Caco-2 (cell line): ENCODE measurements at regions of chr6 and their contacts with region 1.

Region 1: DNA sequence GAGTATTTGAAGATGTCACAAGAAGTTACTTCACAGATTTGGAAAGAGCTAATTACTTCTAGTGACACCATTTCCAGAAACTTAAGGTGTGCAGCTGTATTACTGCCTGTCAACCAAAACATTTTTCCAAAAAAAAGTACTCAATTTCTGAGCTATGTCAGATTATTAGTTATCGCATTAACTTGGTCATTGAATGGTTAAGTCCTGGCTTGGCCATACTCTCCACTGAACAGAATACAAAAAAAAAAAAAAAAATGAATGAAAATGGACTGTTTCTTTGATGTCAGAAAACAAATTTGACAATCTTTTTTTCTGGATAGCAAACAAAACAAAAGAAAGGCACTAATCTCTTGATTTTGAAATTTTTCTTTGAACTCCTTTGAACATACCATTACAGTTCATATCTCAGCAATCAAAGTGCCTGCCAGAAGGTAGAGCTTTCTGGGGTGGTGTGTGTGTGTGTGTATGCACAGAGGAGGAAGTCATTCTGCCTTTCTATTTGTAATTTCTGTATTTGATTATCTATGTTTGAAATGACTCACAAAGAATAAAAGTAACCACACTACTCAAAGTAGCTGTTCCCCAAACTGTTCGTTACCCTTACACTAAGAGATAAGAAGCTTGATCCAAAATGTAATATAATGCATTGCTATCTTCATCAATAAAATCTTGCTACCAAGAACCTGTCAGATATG is 210.8 kb upstream of the FUT9 start:
- DNase-seq: peak; percentile 80 to 84
- H3K4me3 ChIP-seq: no peak overlapping the region
- H3K4me3 Mint-ChIP-seq: peak overlapping the region; percentile 45
- H3K27ac Mint-ChIP-seq: peak overlapping the region; percentile 92
- H3K4me1 ChIP-seq: peaks cover 40% of the 10 kb centered on the region
- H3K4me1 Mint-ChIP-seq: peaks cover 10% of the 10 kb centered on the region
- H3K27me3 ChIP-seq: no peaks in the 10 kb centered on the region
- H3K27me3 Mint-ChIP-seq: no peaks in the 10 kb centered on the region
- CTCF ChIP-seq: no peak

Region 2: DNA sequence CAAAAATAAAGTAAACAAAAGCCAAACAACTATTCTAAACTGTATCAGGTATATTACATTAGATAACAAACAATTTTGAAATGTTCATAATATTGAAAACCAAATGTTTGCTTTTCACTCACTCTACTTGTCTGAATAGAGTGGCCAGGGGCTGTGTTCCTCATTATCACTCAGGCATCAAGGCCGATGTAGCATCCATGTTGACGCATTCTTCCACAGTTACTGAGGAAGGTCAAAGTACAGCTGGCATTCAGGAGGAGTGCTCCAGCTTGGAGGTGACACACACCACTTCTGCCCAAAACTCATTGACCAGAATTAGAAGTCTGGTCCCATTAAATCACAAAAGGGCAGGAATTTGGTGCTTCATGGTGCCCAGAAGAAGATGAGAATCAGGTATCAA is 365.3 kb before region 1 on chr6:
- CTCF ChIA-PET with region 1: no interaction called
- POLR2A ChIA-PET with region 1: no interaction called
- intact Hi-C with region 1: no loop called
- DNase-seq: peak in 1 of 2 experiments; percentile 8
- H3K4me3 ChIP-seq: no peak overlapping the region
- H3K4me3 Mint-ChIP-seq: no peak overlapping the region
- H3K27ac Mint-ChIP-seq: no peak overlapping the region
- H3K4me1 ChIP-seq: peaks cover 7% of the 10 kb centered on the region; the same call in 1 of the 2 replicates
- H3K4me1 Mint-ChIP-seq: peaks cover 6% of the 10 kb centered on the region
- H3K27me3 ChIP-seq: no peaks in the 10 kb centered on the region
- H3K27me3 Mint-ChIP-seq: no peaks in the 10 kb centered on the region
- CTCF ChIP-seq: no peak

Region 3: GRCh38 chr6:95577304-95578105 is 227.5 kb before region 1 on chr6 and contains the start of gene MANEA:
- CTCF ChIA-PET with region 1: no interaction called
- POLR2A ChIA-PET with region 1: interaction called, 6 read pairs
- intact Hi-C with region 1: loop called (anchors 1 kb)
- DNase-seq: peak; percentile 91 to 92
- H3K4me3 ChIP-seq: peak within 1 kb of the TSS; percentile 54
- H3K4me3 Mint-ChIP-seq: peak within 1 kb of the TSS; percentile 97
- H3K27ac Mint-ChIP-seq: peak within 1 kb of the TSS; percentile 89
- H3K4me1 ChIP-seq: peaks cover 16% of the 10 kb centered on the region
- H3K4me1 Mint-ChIP-seq: peaks cover 14% of the 10 kb centered on the region
- H3K27me3 ChIP-seq: no peaks in the 10 kb centered on the region
- H3K27me3 Mint-ChIP-seq: no peaks in the 10 kb centered on the region
- CTCF ChIP-seq: no peak
- total RNA-seq, gene MANEA: 15.7 and 17.1 TPM in 2 replicates

Region 4: GRCh38 chr6:95742767-95743289 is 62.2 kb before region 1 on chr6:
- CTCF ChIA-PET with region 1: no interaction called
- POLR2A ChIA-PET with region 1: no interaction called
- intact Hi-C with region 1: no loop called
- DNase-seq: no peak
- H3K4me3 ChIP-seq: no peak overlapping the region
- H3K4me3 Mint-ChIP-seq: no peak overlapping the region
- H3K27ac Mint-ChIP-seq: no peak overlapping the region
- H3K4me1 ChIP-seq: no peaks in the 10 kb centered on the region
- H3K4me1 Mint-ChIP-seq: no peaks in the 10 kb centered on the region
- H3K27me3 ChIP-seq: no peaks in the 10 kb centered on the region
- H3K27me3 Mint-ChIP-seq: no peaks in the 10 kb centered on the region
- CTCF ChIP-seq: no peak

Region 5: DNA sequence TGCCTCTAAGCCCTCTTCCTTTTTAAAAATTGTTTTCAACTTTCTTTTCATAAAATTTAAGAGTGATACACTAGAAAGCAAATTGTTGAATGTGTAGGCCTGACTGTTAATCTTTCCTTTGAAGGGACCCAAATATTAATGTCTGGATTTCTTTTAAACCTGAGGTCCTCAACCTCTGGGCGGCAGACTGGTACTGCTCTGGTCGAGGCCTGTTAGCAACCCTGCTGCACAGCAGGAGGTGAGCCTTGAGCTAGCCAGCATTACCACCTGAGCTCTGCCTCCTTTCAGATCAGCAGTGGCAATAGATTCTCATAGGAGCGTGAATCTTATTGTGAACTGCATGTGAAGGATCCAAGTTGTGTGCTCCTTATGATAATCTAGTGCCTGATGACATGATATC is 36.5 kb before region 1 on chr6:
- CTCF ChIA-PET with region 1: no interaction called
- POLR2A ChIA-PET with region 1: no interaction called
- intact Hi-C with region 1: no loop called
- DNase-seq: peak; percentile 23 to 37
- H3K4me3 ChIP-seq: no peak overlapping the region
- H3K4me3 Mint-ChIP-seq: no peak overlapping the region
- H3K27ac Mint-ChIP-seq: peak overlapping the region; percentile 13
- H3K4me1 ChIP-seq: peaks cover 15% of the 10 kb centered on the region; the same call in 1 of the 2 replicates
- H3K4me1 Mint-ChIP-seq: peaks cover 26% of the 10 kb centered on the region
- H3K27me3 ChIP-seq: no peaks in the 10 kb centered on the region
- H3K27me3 Mint-ChIP-seq: no peaks in the 10 kb centered on the region
- CTCF ChIP-seq: no peak

Region 6: GRCh38 chr6:95780037-95780436 is 25.0 kb before region 1 on chr6:
- CTCF ChIA-PET with region 1: no interaction called
- POLR2A ChIA-PET with region 1: no interaction called
- intact Hi-C with region 1: loop called (anchors 1 kb)
- DNase-seq: peak in 1 of 2 experiments; percentile 14
- H3K4me3 ChIP-seq: no peak overlapping the region
- H3K4me3 Mint-ChIP-seq: peak overlapping the region; percentile 25
- H3K27ac Mint-ChIP-seq: peak overlapping the region; percentile 82
- H3K4me1 ChIP-seq: peaks cover 25% of the 10 kb centered on the region
- H3K4me1 Mint-ChIP-seq: peaks cover 20% of the 10 kb centered on the region
- H3K27me3 ChIP-seq: no peaks in the 10 kb centered on the region
- H3K27me3 Mint-ChIP-seq: no peaks in the 10 kb centered on the region
- CTCF ChIP-seq: no peak

Region 7: GRCh38 chr6:95790787-95791186 is 14.2 kb before region 1 on chr6:
- CTCF ChIA-PET with region 1: no interaction called
- POLR2A ChIA-PET with region 1: no interaction called
- intact Hi-C with region 1: loop called (anchors 2 kb)
- DNase-seq: no peak
- H3K4me3 ChIP-seq: no peak overlapping the region
- H3K4me3 Mint-ChIP-seq: no peak overlapping the region
- H3K27ac Mint-ChIP-seq: peak overlapping the region; percentile 48
- H3K4me1 ChIP-seq: peaks cover 29% of the 10 kb centered on the region
- H3K4me1 Mint-ChIP-seq: no peaks in the 10 kb centered on the region
- H3K27me3 ChIP-seq: no peaks in the 10 kb centered on the region
- H3K27me3 Mint-ChIP-seq: no peaks in the 10 kb centered on the region
- CTCF ChIP-seq: no peak

Region 8: GRCh38 chr6:95847061-95847460 is 42.1 kb after region 1 on chr6:
- CTCF ChIA-PET with region 1: no interaction called
- POLR2A ChIA-PET with region 1: no interaction called
- intact Hi-C with region 1: no loop called
- DNase-seq: peak in 1 of 2 experiments; percentile 30
- H3K4me3 ChIP-seq: no peak overlapping the region
- H3K4me3 Mint-ChIP-seq: no peak overlapping the region
- H3K27ac Mint-ChIP-seq: no peak overlapping the region
- H3K4me1 ChIP-seq: peaks cover 7% of the 10 kb centered on the region
- H3K4me1 Mint-ChIP-seq: no peaks in the 10 kb centered on the region
- H3K27me3 ChIP-seq: no peaks in the 10 kb centered on the region
- H3K27me3 Mint-ChIP-seq: no peaks in the 10 kb centered on the region
- CTCF ChIP-seq: no peak

Region 9: DNA sequence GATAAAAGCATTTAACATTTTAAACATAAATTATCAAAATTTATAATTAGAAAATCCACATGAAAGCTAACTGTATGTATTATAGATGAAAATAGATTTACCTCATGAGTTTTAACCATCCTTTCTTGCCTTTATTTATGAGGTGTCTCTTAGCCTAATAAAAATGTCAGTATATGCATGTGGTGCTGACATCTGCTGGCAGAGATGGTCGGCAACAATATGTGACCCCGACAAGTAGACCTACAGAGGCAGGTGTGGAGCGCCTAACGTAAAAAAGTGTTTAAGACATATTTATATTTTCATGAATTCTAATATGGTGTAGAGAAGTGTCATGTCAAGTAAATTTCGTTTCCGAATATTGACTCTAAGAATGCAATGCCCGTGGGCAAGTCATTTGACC is 61.7 kb after region 1 on chr6:
- CTCF ChIA-PET with region 1: no interaction called
- POLR2A ChIA-PET with region 1: no interaction called
- intact Hi-C with region 1: loop called (anchors 5 kb)
- DNase-seq: peak; percentile 39 to 43
- H3K4me3 ChIP-seq: no peak overlapping the region
- H3K4me3 Mint-ChIP-seq: no peak overlapping the region
- H3K27ac Mint-ChIP-seq: no peak overlapping the region
- H3K4me1 ChIP-seq: no peaks in the 10 kb centered on the region
- H3K4me1 Mint-ChIP-seq: peaks cover 7% of the 10 kb centered on the region
- H3K27me3 ChIP-seq: no peaks in the 10 kb centered on the region
- H3K27me3 Mint-ChIP-seq: no peaks in the 10 kb centered on the region
- CTCF ChIP-seq: peak; percentile 50 to 54

Region 10: GRCh38 chr6:96299525-96299924 is 494.5 kb after region 1 on chr6:
- CTCF ChIA-PET with region 1: interaction called, 6 read pairs
- POLR2A ChIA-PET with region 1: no interaction called
- intact Hi-C with region 1: loop called (anchors 10 kb)
- DNase-seq: no peak
- H3K4me3 ChIP-seq: no peak overlapping the region
- H3K4me3 Mint-ChIP-seq: no peak overlapping the region
- H3K27ac Mint-ChIP-seq: no peak overlapping the region
- H3K4me1 ChIP-seq: peaks cover 42% of the 10 kb centered on the region
- H3K4me1 Mint-ChIP-seq: peaks cover 32% of the 10 kb centered on the region
- H3K27me3 ChIP-seq: no peaks in the 10 kb centered on the region
- H3K27me3 Mint-ChIP-seq: no peaks in the 10 kb centered on the region
- CTCF ChIP-seq: no peak